Sigmoid colon (tissue), 7 donors: ENCODE measurements at regions of chr2 and their contacts with region 1.

Region 1: DNA sequence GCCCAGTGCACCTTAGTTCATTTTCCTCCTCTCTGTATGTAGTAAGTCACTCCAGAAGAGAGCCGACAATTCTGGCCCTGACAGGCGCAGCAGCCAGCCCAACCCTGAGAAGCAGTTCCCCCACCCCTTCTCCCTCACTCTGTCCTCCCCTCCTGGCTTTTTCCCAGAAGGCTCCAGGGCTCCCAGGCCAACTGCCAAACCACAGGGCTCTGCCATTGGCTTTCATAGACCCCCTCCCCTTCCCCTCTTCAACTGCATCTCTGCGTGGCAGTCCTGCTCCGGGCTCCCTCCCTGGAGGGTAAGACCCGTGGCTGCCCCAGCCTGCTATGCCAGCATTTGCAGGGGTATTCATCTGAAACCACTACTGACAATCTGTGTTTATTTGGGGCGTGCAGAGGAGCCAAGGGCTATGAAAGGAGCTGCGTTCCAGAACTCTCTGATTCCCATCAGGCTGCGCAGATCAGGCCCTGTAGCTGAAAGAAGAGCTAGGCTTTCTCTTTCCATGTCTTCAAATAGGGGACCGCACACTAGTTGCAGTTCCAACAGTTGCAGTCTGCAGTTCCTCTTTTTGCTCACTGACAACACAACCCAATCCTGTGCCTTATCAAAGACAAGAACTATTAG is 388.6 kb upstream of the TNP1 start:
- DNase-seq: peak; percentile 94
- H3K4me3 ChIP-seq: peak overlapping the region in 1 of 4 donors; percentile 8
- H3K27ac ChIP-seq: peak overlapping the region; percentile 83 to 94 (median 88)
- H3K4me1 ChIP-seq: peaks cover 0 to 65% (median 58%) of the 10 kb centered on the region in 4 donors
- H3K27me3 ChIP-seq: no peaks in the 10 kb centered on the region
- CTCF ChIP-seq: no peak
- EP300 ChIP-seq: peak in 1 of 4 donors; percentile 67
- POLR2A ChIP-seq: peak in 1 of 2 donors; percentile 34

Region 2: GRCh38 chr2:216692636-216693413 is 555.6 kb before region 1 on chr2:
- intact Hi-C with region 1: loop called (anchors 1 kb)
- DNase-seq: peak; percentile 97
- H3K4me3 ChIP-seq: peak overlapping the region; percentile 59 to 85 (median 78)
- H3K27ac ChIP-seq: peak overlapping the region; percentile 85 to 93 (median 92)
- H3K4me1 ChIP-seq: peaks cover 0 to 79% (median 55%) of the 10 kb centered on the region in 4 donors
- H3K27me3 ChIP-seq: no peaks in the 10 kb centered on the region
- CTCF ChIP-seq: no peak
- EP300 ChIP-seq: no peak
- POLR2A ChIP-seq: no peak

Region 3: GRCh38 chr2:217064234-217065024 is 184.0 kb before region 1 on chr2:
- intact Hi-C with region 1: loop called (anchors 2 kb)
- DNase-seq: peak; percentile 74
- H3K4me3 ChIP-seq: peak overlapping the region in 3 of 4 donors; percentile 22 to 32 (median 25)
- H3K27ac ChIP-seq: peak overlapping the region in 3 of 4 donors; percentile 70 to 79 (median 75)
- H3K4me1 ChIP-seq: peaks cover 0 to 45% (median 32%) of the 10 kb centered on the region in 4 donors
- H3K27me3 ChIP-seq: no peaks in the 10 kb centered on the region
- CTCF ChIP-seq: no peak
- EP300 ChIP-seq: peak in 1 of 4 donors; percentile 58
- POLR2A ChIP-seq: no peak

Region 4: GRCh38 chr2:217434181-217434975 is 186.0 kb after region 1 on chr2:
- intact Hi-C with region 1: loop called (anchors 5 kb)
- DNase-seq: peak; percentile 98
- H3K4me3 ChIP-seq: peak overlapping the region in 2 of 4 donors; percentile 5 to 25
- H3K27ac ChIP-seq: peak overlapping the region; percentile 74 to 83 (median 80)
- H3K4me1 ChIP-seq: peaks cover 2 to 86% (median 85%) of the 10 kb centered on the region in 4 donors
- H3K27me3 ChIP-seq: no peaks in the 10 kb centered on the region
- CTCF ChIP-seq: no peak
- EP300 ChIP-seq: no peak
- POLR2A ChIP-seq: no peak

Region 5: DNA sequence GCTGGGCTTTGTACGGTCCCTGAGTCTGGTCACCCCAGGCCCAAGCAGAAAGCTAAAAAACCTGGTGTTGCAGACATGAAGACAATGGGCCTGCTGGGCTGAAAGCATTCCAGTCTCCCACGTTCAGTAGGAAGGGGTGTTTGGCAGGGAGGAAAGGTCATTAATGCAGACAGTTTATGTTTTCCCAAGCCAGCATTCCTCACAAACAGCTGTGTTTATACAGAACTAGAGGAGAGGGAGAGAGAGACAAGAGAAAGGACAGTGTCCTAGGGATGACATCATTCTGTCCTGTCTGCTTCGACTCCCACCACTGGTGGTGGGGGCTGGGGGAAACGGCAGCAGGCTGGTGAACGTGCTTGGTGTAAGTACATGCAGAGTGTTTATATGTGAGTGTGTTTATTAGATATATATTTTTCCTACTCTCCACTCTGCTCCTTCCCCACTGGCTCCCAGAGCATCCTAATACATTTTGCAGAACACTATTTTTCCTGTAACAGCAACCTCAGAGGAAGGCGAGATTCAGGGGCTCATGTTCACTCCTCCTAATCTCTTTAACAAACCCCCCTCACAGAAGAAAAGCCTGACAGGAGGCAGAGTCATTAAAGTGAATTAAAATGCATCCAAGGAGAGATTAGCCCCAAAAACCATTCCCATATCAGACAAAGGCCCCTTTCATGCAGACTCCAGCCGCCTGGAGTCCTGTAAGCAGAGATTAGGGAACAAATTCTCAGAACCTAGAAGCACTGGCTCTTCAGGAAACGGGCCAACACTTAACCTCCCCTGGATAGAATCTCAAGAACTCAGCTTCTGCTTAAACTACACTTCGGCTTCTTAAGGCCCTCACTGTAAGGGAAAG is 374.0 kb after region 1 on chr2:
- intact Hi-C with region 1: loop called (anchors 5 kb)
- DNase-seq: peak; percentile 85
- H3K4me3 ChIP-seq: no peak overlapping the region
- H3K27ac ChIP-seq: peak overlapping the region; percentile 41 to 92 (median 80)
- H3K4me1 ChIP-seq: peaks cover 0 to 79% (median 63%) of the 10 kb centered on the region in 4 donors
- H3K27me3 ChIP-seq: no peaks in the 10 kb centered on the region
- CTCF ChIP-seq: no peak
- EP300 ChIP-seq: peak in 3 of 4 donors; percentile 67 to 94 (median 90)
- POLR2A ChIP-seq: no peak